Activated T-helper 2 cell treated with anti-CD3 and anti-CD28 coated beads, Interferon-gamma antibody, Interleukin-2, Interleukin-4, amounts not matched to agents 10 μg/mL and 5 μg/mL and 100 μg/mL, durations not matched to agents 14 hours and 24 hours and 36 hours (primary cell): ENCODE measurements at regions of chr16 and their contacts with region 1.

Region 1: GRCh38 chr16:74813109-74813641 is 38.6 kb upstream of the FA2H start:
- DNase-seq: peak; percentile 60
- H3K4me3 Mint-ChIP-seq: no peak overlapping the region
- H3K27ac Mint-ChIP-seq: no peak overlapping the region
- H3K4me1 Mint-ChIP-seq: no peaks in the 10 kb centered on the region
- H3K27me3 Mint-ChIP-seq: no peaks in the 10 kb centered on the region

Region 2: DNA sequence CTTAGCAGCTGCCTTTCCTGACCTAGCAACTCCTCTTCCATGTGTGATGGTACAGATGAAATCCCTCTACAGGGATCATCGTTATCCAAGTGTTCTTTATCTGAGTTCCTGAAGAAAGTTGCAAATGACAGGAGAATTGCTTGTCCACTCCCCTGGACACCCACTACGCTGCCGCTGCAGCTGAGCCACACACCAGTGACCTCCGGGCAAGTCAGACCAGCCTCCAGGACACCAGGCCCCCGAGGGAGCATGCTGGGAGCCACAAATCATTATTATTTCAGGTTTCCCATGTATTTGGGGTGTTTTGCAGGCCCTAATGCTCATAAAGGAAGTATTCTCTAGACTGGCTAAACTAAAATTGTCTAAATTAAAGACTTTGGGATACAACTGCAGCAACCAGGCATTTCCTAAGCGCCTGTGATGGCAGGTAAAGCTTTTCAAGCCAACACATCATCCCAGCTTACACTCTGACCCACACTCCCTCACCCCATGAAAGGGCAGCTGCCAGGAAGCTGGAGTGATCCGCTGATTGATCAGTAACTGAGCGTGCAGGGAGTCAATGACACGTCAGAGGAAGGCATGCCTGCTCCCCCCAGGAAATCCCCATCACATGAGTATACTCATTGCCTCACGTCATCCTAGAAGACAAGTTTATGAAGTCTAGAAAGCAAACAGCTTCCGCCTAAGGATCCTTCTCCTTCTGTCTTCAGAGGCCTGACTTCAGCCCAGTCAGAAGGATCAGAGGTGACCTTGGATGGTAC is 53.0 kb before region 1 on chr16:
- intact Hi-C with region 1: no loop called
- DNase-seq: no peak
- H3K4me3 Mint-ChIP-seq: no peak overlapping the region
- H3K27ac Mint-ChIP-seq: no peak overlapping the region
- H3K4me1 Mint-ChIP-seq: no peaks in the 10 kb centered on the region
- H3K27me3 Mint-ChIP-seq: no peaks in the 10 kb centered on the region

Region 3: DNA sequence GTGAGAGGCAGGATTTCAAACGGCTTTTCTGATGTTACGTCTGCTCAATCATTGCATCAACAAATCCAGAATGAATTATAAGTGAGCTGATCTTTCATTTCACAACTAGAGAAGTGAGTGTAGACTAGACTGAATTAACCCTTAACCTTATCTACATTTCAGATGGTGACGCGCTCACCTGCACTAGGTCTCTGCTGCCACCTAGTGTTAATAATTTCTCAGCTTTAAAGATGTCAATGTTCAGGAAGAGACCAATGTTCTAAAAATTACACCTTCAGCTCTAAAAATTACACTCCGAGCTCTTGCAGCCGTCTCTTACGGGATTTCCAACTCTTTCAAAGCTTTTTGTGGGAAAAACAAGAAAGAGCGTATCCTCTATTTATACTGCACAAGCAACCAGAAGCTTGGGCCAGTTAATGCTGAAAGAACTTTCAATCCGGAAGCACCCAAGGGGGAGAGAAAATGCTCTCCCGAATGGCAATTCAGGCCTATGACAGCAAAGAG is 49.6 kb after region 1 on chr16:
- intact Hi-C with region 1: loop called (anchors 5 kb)
- DNase-seq: no peak
- H3K4me3 Mint-ChIP-seq: no peak overlapping the region
- H3K27ac Mint-ChIP-seq: no peak overlapping the region
- H3K4me1 Mint-ChIP-seq: peaks cover 3% of the 10 kb centered on the region
- H3K27me3 Mint-ChIP-seq: no peaks in the 10 kb centered on the region